GM12878 (cell line): ENCODE measurements at regions of chr9 and their contacts with region 1.

Region 1: DNA sequence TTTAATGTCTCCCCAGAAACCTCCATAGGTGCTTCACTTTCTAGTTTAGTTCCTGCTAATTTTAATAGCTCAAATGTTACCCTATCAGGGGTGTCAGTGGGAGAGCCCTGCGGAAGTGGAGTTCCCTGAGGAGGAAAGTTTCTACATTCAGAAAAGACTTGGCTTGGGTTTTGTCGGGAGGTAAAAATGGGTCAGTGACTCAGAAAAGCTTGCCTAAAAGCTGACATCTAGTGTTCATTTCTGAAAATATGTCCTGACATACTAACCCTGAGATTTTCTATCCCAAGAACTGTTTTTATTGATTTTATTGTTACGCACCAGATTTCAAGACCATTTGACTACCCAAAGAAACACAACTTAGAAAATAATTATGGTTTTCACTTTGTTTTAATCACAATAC is 40.9 kb upstream of the GLDC start:
- DNase-seq: no peak
- ATAC-seq: no peak
- H3K4me3 ChIP-seq: no peak overlapping the region
- H3K27ac ChIP-seq: peak overlapping the region; percentile 65
- H3K4me1 ChIP-seq: peaks cover 40% of the 10 kb centered on the region
- H3K27me3 ChIP-seq: no peaks in the 10 kb centered on the region
- CTCF ChIP-seq: peak; percentile 24 to 57 (median 43); a peak in 3 of 6 replicates
- EP300 ChIP-seq: no peak
- POLR2A ChIP-seq: no peak
- RAD21 ChIP-seq: peak; percentile 64

Region 2: DNA sequence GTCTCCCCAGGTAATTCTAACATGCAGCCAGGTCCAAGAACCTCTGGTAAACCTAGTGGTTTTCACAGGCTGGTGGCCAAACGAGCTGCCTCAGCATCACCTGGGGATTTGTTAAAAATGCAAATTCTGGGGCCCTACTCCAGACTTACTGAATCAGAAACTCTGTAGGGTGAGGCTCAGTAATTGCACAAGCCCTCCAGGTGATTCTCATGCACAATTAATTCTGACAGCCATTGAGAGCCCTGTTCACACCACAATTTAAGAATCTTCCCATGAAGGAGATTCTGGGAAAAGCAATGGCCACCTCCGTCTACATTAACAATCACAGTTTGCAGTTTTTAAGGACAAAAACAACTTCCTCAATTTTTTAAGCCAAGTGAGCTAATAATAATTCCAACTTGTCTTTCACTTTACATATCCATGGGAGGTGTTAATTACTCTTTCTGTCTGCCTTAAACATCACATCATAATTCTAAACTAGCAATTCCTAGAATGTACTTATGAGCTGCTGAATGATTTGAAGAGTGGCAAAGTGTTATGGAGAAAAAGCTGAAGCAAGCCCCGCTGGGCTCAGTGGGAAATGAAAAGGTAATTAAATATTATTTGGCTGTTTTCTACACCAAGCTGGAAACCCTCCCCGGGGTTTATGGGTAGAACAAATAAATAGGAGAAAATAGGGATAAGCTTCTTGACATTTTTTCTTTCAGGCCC is 110.9 kb before region 1 on chr9:
- CTCF ChIA-PET with region 1: interaction called, 26 read pairs
- POLR2A ChIA-PET with region 1: interaction called, 9 read pairs
- RAD21 ChIA-PET with region 1: interaction called, 11 read pairs
- SMC1A ChIA-PET with region 1: interaction called, 28 read pairs
- in situ Hi-C with region 1: no loop called
- intact Hi-C with region 1: no loop called
- DNase-seq: peak; percentile 53
- ATAC-seq: peak; percentile 95
- H3K4me3 ChIP-seq: no peak overlapping the region
- H3K27ac ChIP-seq: peak overlapping the region; percentile 4; the same call in 1 of the 2 replicates
- H3K4me1 ChIP-seq: peaks cover 18% of the 10 kb centered on the region
- H3K27me3 ChIP-seq: no peaks in the 10 kb centered on the region
- CTCF ChIP-seq: no peak
- EP300 ChIP-seq: no peak
- POLR2A ChIP-seq: no peak
- RAD21 ChIP-seq: no peak

Region 3: DNA sequence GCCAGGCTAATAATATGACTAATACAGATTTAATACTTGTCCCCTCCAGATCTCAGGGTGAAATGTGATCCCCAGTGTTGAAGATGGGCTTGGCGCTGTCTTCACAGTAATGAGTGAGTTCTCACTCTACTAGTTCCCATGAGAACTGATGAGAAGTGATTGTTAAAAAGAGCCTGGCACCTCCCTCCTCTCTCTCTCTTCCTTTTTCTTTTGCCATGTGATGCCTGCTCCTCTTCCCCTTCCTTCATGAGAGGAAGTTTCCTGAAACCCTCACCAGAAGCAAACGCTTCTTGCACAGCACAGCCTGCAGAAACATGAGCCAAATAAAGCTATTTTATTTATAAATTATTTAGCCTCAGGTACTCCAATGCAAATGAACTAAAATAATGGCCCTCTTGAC is 96.1 kb before region 1 on chr9:
- CTCF ChIA-PET with region 1: interaction called, 56 read pairs
- POLR2A ChIA-PET with region 1: interaction called, 3 read pairs
- RAD21 ChIA-PET with region 1: interaction called, 17 read pairs
- SMC1A ChIA-PET with region 1: interaction called, 40 read pairs
- in situ Hi-C with region 1: no loop called
- intact Hi-C with region 1: loop called (anchors 1 kb)
- DNase-seq: no peak
- ATAC-seq: no peak
- H3K4me3 ChIP-seq: no peak overlapping the region
- H3K27ac ChIP-seq: no peak overlapping the region
- H3K4me1 ChIP-seq: no peaks in the 10 kb centered on the region
- H3K27me3 ChIP-seq: no peaks in the 10 kb centered on the region
- CTCF ChIP-seq: no peak
- EP300 ChIP-seq: no peak
- POLR2A ChIP-seq: no peak
- RAD21 ChIP-seq: no peak

Region 4: DNA sequence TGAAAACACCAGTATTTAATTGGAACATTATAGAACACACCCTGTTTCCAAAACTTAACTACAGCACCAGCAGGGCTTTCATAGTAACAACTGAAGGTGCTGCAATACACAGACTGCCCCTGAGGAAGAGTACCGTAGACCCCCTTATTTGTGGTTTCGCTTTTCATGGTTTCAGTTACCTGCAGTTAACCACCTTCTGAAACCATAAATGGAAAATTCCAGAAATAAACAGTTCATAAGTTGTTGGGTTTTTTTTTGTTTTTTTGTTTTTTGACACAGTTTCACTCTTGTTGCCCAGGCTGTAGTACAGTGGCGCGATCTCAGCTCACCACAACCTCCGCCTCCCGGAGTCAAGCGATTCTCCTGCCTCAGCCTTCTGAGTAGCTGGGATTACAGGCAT is 31.4 kb before region 1 on chr9:
- CTCF ChIA-PET with region 1: interaction called, 10 read pairs
- POLR2A ChIA-PET with region 1: interaction called, 4 read pairs
- RAD21 ChIA-PET with region 1: interaction called, 5 read pairs
- SMC1A ChIA-PET with region 1: interaction called, 6 read pairs
- in situ Hi-C with region 1: no loop called
- intact Hi-C with region 1: no loop called
- DNase-seq: peak; percentile 84
- ATAC-seq: peak; percentile 91
- H3K4me3 ChIP-seq: peak overlapping the region; percentile 21; the same call in 1 of the 2 replicates
- H3K27ac ChIP-seq: peak overlapping the region; percentile 49
- H3K4me1 ChIP-seq: peaks cover 29% of the 10 kb centered on the region
- H3K27me3 ChIP-seq: no peaks in the 10 kb centered on the region
- CTCF ChIP-seq: no peak
- EP300 ChIP-seq: peak; percentile 68 to 77; a peak in 3 of 4 replicates
- POLR2A ChIP-seq: no peak
- RAD21 ChIP-seq: 0 out of 2 replicates have a peak, but pooled peaks have one; percentile 8

Region 5: DNA sequence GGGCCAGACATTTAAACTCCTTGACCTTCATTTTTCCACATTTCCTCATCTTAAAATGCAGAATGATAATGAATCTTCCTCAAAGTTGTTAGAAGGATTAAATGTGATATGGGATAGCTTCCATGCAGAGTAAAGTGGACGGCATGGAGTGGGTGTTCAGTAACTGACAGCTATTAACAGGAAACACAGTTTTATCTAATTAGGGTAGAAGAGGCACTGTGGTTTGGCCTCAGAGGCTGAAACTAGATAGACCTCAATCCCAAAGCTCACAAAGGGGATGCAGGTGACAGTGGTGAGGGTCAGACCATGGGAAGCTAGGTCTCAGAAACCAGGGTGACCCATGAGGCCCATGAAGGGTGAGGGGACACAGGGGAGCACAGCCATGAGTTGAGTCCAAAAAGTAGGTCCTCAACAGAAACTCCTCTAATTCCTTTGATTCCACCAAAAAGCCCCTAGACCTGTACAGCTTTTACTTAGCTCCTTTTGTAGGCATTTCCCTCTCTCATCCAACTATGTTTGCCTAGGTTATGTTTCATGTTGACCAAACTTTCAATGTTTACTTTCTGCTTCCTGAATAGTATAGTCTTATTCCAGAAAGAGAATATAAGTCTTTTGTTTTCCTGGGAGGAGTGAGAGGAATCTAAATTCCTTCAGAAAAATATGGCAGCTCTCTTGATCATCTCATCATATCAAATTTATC is 12.9 kb before region 1 on chr9:
- CTCF ChIA-PET with region 1: interaction called, 35 read pairs
- POLR2A ChIA-PET with region 1: interaction called, 28 read pairs
- RAD21 ChIA-PET with region 1: interaction called, 14 read pairs
- SMC1A ChIA-PET with region 1: interaction called, 21 read pairs
- in situ Hi-C with region 1: no loop called
- intact Hi-C with region 1: no loop called
- DNase-seq: no peak
- ATAC-seq: peak; percentile 77
- H3K4me3 ChIP-seq: no peak overlapping the region
- H3K27ac ChIP-seq: no peak overlapping the region
- H3K4me1 ChIP-seq: peaks cover 9% of the 10 kb centered on the region
- H3K27me3 ChIP-seq: no peaks in the 10 kb centered on the region
- CTCF ChIP-seq: no peak
- EP300 ChIP-seq: peak; percentile 66 to 77; a peak in 2 of 4 replicates
- POLR2A ChIP-seq: no peak
- RAD21 ChIP-seq: no peak

Region 6: GRCh38 chr9:6715755-6716643 is 29.6 kb after region 1 on chr9:
- CTCF ChIA-PET with region 1: interaction called, 10 read pairs
- POLR2A ChIA-PET with region 1: interaction called, 15 read pairs
- RAD21 ChIA-PET with region 1: interaction called, 8 read pairs
- SMC1A ChIA-PET with region 1: interaction called, 44 read pairs
- in situ Hi-C with region 1: no loop called
- intact Hi-C with region 1: no loop called
- DNase-seq: peak; percentile 76
- ATAC-seq: peak; percentile 96
- H3K4me3 ChIP-seq: peak overlapping the region; percentile 68
- H3K27ac ChIP-seq: peak overlapping the region; percentile 73
- H3K4me1 ChIP-seq: peaks cover 13% of the 10 kb centered on the region
- H3K27me3 ChIP-seq: no peaks in the 10 kb centered on the region
- CTCF ChIP-seq: no peak
- EP300 ChIP-seq: no peak
- POLR2A ChIP-seq: peak; percentile 97
- RAD21 ChIP-seq: no peak